ENCODE measurements at regions of chr10 and their contacts with region 1.

Region 1: DNA sequence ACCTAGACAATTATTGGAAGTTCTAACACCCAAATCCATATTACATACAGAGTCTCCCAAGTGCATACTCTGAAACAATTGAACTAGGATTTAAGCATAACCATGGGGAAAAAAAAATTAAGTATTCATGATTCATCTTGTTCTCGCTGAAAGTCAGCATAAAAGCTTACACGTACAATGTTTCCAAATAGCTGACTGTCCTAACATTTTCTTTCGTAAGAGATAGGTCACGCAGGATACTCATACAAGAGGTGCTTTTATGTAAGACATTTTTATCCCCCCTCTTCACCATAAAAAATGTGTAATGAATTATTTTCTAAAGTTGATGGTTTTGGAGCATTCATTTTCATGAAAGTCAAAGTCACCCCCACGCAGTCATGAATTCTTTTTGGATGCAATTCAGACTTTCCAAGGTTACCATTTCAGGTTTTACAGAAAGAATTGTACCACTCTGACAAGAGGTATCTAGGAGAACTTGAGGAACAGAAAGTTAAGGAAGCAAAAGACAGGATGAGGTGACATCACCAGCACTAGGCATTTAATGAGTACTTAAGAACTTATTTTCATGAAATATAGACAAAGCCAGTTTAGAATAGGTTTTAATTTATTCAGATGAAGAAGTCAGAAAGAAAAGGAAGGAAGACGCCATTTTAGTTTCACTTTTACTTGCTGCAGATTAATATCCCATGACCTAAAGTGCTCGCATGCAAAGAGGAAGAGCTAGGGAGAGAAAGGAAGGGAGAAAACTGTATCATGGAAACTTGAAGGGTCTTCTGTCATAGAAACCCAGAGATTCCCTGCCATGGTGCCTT is 55.8 kb downstream of the TMEM26 start:
- DNase-seq: peak; percentile 57
- ATAC-seq: no peak
- H3K4me3 ChIP-seq: peak overlapping the region in 4 of 5 experiments; percentile 23 to 53 (median 31)
- H3K4me3 Mint-ChIP-seq: peak overlapping the region; percentile 58
- H3K27ac ChIP-seq: peak overlapping the region in 1 of 2 donors; percentile 6
- H3K27ac Mint-ChIP-seq: peak overlapping the region; percentile 33
- H3K4me1 ChIP-seq: peaks cover 13 to 16% of the 10 kb centered on the region in 2 donors
- H3K4me1 Mint-ChIP-seq: peaks cover 14% of the 10 kb centered on the region
- H3K27me3 ChIP-seq: no peaks in the 10 kb centered on the region
- H3K27me3 Mint-ChIP-seq: no peaks in the 10 kb centered on the region
- CTCF ChIP-seq: no peak

Region 2: DNA sequence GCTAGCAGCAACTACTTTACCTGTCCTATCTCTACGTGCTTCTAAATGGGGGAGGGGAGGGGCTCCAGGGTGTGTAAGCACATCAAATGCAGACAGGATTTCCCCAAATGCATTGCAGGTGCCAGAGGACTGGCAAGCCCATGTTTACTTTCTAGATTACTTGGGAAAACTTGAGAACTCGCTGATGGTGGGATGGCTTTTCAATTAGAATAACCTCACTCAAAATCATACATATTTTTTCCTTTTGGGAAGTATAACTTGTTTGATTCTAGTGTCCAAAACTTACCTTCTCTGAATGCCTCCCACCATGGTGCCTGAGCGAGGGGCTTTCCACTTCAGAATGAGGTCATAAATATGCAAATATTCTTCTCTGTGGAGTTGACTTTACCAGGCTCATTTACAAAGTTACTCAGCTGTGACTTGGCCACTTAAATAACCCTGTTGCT is 262.1 kb before region 1 on chr10:
- CTCF ChIA-PET with region 1: no interaction called
- POLR2A ChIA-PET with region 1: no interaction called
- intact Hi-C with region 1: loop called (anchors 1 kb)
- DNase-seq: peak; percentile 84
- ATAC-seq: peak; percentile 93
- H3K4me3 ChIP-seq: peak overlapping the region in 1 of 5 experiments; percentile 31
- H3K4me3 Mint-ChIP-seq: peak overlapping the region; percentile 76
- H3K27ac ChIP-seq: peak overlapping the region; percentile 67 to 89
- H3K27ac Mint-ChIP-seq: peak overlapping the region; percentile 92
- H3K4me1 ChIP-seq: peaks cover 32 to 34% of the 10 kb centered on the region in 2 donors
- H3K4me1 Mint-ChIP-seq: peaks cover 43% of the 10 kb centered on the region
- H3K27me3 ChIP-seq: no peaks in the 10 kb centered on the region
- H3K27me3 Mint-ChIP-seq: no peaks in the 10 kb centered on the region
- CTCF ChIP-seq: no peak

Measured in B cell (primary cell).